Motor neuron (in vitro differentiated cells): ENCODE measurements at regions of chr2 and their contacts with region 1.

Region 1: DNA sequence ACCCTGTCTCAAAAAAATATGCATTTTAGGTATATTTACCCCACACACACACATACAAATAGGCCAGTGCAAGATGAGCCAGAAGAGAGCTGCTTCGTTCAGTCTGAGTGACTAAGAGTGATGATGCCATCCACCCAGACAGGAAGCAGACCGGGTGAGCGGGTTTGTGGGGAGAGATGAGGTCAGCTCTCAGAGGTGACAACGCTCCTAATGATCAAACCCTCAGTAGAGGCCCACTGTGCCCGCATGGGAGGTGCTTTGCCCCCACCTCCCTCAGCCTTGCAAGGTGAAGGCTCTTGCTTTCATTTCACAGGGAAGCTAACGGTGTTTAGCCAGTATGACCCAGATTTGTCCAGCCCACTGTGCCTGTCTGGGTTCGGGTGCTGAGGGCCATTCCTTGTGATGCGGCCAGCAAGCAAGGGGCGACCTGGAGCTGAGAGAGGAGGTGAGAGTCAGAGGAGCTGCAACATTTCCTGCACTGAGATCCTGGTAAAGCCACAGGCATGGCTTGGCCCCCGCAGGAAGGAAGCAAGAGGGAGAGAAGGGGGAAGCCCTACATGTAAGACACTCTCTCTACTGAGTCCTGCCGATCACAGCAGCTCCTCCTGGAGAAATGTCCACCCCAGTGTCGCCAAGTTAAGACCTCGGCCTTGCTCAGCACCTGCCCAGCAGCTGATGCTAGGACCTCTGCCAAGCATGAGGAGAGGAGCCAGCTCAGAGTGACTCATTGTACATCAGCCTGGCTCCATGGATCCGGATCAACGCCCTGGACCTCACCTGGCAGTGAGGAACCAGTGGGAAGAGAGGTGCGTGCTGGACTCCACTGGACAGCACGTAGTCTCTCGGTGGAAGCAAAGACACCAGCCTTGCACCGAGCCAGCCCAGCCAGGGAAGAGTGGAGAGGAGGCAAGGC is 37.0 kb downstream of the NIFK start:
- ATAC-seq: peak; percentile 63 to 98 (median 98)
- H3K4me3 ChIP-seq: no peak overlapping the region
- H3K27ac ChIP-seq: peak overlapping the region in 1 of 2 donors; percentile 78
- H3K4me1 ChIP-seq: peaks cover 0 to 10% of the 10 kb centered on the region in 2 donors

Region 2: DNA sequence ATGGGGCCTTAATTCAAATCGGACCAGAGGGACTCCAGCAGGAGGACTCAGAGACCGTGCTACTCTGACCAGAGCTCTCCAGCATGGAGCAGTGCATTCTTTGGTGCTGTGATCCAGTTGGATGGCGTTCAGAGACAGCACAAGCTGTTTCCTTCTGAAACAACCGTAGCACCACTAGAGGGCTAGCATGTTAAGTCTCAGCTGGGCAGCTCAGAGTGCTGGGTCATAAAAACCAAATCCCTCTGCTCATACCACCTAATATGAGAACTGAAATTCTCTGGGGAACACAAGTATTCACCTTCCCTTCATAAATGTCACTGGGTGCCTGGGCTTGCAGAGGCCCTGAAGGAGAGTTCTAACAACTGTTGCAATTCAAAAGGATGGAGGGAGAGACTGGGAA is 316.9 kb before region 1 on chr2:
- in situ Hi-C with region 1: loop called in 2 of 9 experiments (anchors 25 kb)
- ATAC-seq: no peak
- H3K4me3 ChIP-seq: no peak overlapping the region
- H3K27ac ChIP-seq: no peak overlapping the region
- H3K4me1 ChIP-seq: no peaks in the 10 kb centered on the region

Region 3: GRCh38 chr2:121530212-121530705 is 169.4 kb before region 1 on chr2:
- in situ Hi-C with region 1: loop called in 2 of 9 experiments (anchors 25 kb)
- ATAC-seq: peak; percentile 47 to 74 (median 66)
- H3K4me3 ChIP-seq: peak overlapping the region; percentile 48 to 66 (median 53)
- H3K27ac ChIP-seq: peak overlapping the region; percentile 100
- H3K4me1 ChIP-seq: peaks cover 33% of the 10 kb centered on the region in 2 donors

Region 4: GRCh38 chr2:121617042-121617599 is 82.6 kb before region 1 on chr2:
- in situ Hi-C with region 1: loop called in 1 of 9 experiments (anchors 25 kb)
- ATAC-seq: peak in 6 of 8 experiments; percentile 16 to 90 (median 80)
- H3K4me3 ChIP-seq: no peak overlapping the region
- H3K27ac ChIP-seq: peak overlapping the region in 1 of 2 donors; percentile 40
- H3K4me1 ChIP-seq: peaks cover 2 to 8% of the 10 kb centered on the region in 2 donors